ENCODE measurements at regions of chr12 and their contacts with region 1.

Region 1: GRCh38 chr12:103986829-103987228 is 21.2 kb downstream of the TDG start:
- DNase-seq: no peak
- H3K4me3 ChIP-seq: no peak overlapping the region
- H3K27ac ChIP-seq: no peak overlapping the region
- H3K4me1 ChIP-seq: no peaks in the 10 kb centered on the region
- H3K27me3 ChIP-seq: no peaks in the 10 kb centered on the region
- CTCF ChIP-seq: no peak

Region 2: GRCh38 chr12:103944964-103945363 is 41.9 kb before region 1 on chr12:
- intact Hi-C with region 1: loop called (anchors 5 kb)
- DNase-seq: no peak
- H3K4me3 ChIP-seq: no peak overlapping the region
- H3K27ac ChIP-seq: no peak overlapping the region
- H3K4me1 ChIP-seq: no peaks in the 10 kb centered on the region
- H3K27me3 ChIP-seq: no peaks in the 10 kb centered on the region
- CTCF ChIP-seq: no peak

Region 3: DNA sequence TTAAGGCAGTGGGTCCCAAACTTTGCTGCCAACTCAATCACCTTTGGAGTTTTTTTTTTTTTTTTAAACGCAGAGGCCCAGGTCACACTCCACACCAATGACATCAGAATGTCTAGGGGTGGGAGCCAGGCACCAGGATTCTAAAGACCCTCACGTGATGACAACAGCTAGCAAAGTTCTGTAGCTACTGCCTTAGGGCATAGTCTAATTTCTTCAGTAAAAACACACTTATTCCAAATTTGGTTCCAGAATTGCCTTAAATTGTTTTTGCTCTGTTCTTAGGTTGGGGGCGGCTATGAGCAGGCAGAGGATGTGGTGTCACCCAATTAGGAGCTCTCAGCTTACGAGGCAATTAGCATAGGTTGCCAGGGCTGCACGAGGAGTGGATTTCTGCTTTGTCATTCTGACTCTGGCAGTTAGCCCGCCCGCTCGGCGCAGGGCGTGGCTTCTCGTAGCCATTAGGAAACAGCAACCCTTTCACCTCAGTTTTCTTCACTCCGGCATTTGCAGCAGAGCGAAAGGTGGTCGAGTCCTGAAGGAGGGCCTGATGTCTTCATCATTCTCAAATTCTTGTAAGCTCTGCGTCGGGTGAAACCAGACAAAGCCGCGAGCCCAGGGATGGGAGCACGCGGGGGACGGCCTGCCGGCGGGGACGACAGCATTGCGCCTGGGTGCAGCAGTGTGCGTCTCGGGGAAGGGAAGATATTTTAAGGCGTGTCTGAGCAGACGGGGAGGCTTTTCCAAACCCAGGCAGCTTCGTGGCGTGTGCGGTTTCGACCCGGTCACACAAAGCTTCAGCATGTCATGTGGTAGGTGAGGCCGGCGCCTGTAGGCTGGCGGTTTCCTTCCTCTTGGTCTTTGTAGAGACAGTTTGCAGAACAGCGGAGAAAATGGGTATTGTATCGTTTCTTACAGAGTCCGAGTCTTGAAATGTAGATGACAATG is 300.0 kb after region 1 on chr12:
- intact Hi-C with region 1: no loop called
- DNase-seq: peak; percentile 94
- H3K4me3 ChIP-seq: peak overlapping the region; percentile 72
- H3K27ac ChIP-seq: peak overlapping the region; percentile 94
- H3K4me1 ChIP-seq: peaks cover 49% of the 10 kb centered on the region
- H3K27me3 ChIP-seq: no peaks in the 10 kb centered on the region
- CTCF ChIP-seq: no peak